ENCODE measurements at regions of chr19 and their contacts with region 1.

Region 1: GRCh38 chr19:2061495-2062381 is 10.7 kb upstream of the MKNK2 start:
- DNase-seq: peak; percentile 99

Region 2: DNA sequence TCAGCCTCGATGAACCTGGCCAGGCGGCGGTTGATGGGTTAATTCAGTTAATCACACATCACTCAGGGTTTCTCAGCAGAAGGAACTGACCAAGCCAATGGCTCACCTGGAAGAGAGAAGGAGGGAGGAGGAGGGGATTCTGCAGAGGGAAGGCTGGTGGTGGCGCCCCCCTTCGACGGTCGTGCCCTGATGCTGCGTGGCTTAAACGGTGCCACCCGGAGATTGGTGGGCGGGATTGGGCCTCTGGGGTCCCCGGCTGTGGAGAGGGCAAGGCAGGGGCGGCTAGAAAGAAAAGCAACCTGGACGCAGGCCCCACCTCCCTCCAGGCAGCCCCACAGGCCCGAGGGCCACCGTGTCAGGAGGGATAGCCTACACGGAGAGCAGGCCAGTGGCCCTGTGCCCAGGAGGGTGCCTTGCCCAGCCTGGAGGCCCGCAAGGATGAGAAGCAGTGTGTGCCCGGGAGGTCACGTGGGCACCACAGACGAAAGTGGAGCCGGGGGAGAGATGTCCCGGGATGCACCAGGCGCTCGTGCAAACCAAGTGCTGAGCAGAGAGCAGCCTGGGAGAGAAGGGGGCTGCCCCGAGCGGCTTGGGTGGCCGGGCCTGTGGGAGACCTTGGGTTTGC is 104.8 kb before region 1 on chr19:
- intact Hi-C with region 1: no loop called
- DNase-seq: peak; percentile 79

Region 3: GRCh38 chr19:2032296-2032941 is 29.3 kb before region 1 on chr19:
- intact Hi-C with region 1: loop called (anchors 2 kb)
- DNase-seq: peak; percentile 98

Region 4: GRCh38 chr19:2049741-2050348 is 11.9 kb before region 1 on chr19:
- intact Hi-C with region 1: loop called (anchors 2 kb)
- DNase-seq: peak; percentile 95

Region 5: GRCh38 chr19:2081873-2082838 is 20.4 kb after region 1 on chr19:
- intact Hi-C with region 1: no loop called
- DNase-seq: no peak

Measured in cardiac septum (tissue), 1 donor.